ENCODE measurements at regions of chr1 and their contacts with region 1.

Region 1: DNA sequence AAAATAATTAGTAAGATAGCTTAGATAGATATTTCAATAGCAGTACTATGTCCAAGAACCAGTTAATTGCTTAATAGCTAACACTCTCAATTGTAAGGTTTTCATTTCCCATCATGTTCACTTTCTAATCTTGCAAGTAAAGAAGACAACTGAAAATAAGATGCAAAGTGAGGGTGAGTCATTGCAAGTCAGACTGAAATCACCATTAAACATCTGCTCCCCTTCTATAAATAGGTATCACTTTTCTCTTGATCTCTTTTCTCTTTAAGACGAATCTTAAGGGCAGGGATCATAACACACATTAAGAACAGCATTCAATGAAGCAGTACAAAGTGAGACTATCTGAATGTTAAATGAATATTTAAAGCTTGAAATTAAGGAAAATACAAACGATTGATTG is 40.4 kb downstream of the UBR4 start:
- DNase-seq: no peak
- ATAC-seq: peak; percentile 95
- H3K4me3 Mint-ChIP-seq: no peak overlapping the region
- H3K27ac Mint-ChIP-seq: peak overlapping the region; percentile 96
- H3K4me1 Mint-ChIP-seq: peaks cover 22% of the 10 kb centered on the region
- H3K27me3 Mint-ChIP-seq: no peaks in the 10 kb centered on the region

Region 2: GRCh38 chr1:19123837-19124236 is 45.8 kb before region 1 on chr1:
- CTCF ChIA-PET with region 1: interaction called, 3 read pairs
- POLR2A ChIA-PET with region 1: no interaction called
- intact Hi-C with region 1: loop called in 1 of 2 experiments (anchors 5 kb)
- DNase-seq: peak; percentile 38
- ATAC-seq: peak; percentile 48
- H3K4me3 Mint-ChIP-seq: no peak overlapping the region
- H3K27ac Mint-ChIP-seq: peak overlapping the region; percentile 83
- H3K4me1 Mint-ChIP-seq: peaks cover 39% of the 10 kb centered on the region
- H3K27me3 Mint-ChIP-seq: no peaks in the 10 kb centered on the region

Region 3: GRCh38 chr1:19232526-19232851 is 62.8 kb after region 1 on chr1:
- CTCF ChIA-PET with region 1: interaction called, 3 read pairs
- POLR2A ChIA-PET with region 1: no interaction called
- intact Hi-C with region 1: loop called in 1 of 2 experiments (anchors 5 kb)
- DNase-seq: peak; percentile 19
- ATAC-seq: no peak
- H3K4me3 Mint-ChIP-seq: no peak overlapping the region
- H3K27ac Mint-ChIP-seq: no peak overlapping the region
- H3K4me1 Mint-ChIP-seq: no peaks in the 10 kb centered on the region
- H3K27me3 Mint-ChIP-seq: no peaks in the 10 kb centered on the region

Measured in activated CD4-positive, alpha-beta T cell treated with anti-CD3 and anti-CD28 coated beads for 36 hours (primary cell).